CD8-positive, alpha-beta T cell (primary cell): ENCODE measurements at regions of chr4 and their contacts with region 1.

Region 1: DNA sequence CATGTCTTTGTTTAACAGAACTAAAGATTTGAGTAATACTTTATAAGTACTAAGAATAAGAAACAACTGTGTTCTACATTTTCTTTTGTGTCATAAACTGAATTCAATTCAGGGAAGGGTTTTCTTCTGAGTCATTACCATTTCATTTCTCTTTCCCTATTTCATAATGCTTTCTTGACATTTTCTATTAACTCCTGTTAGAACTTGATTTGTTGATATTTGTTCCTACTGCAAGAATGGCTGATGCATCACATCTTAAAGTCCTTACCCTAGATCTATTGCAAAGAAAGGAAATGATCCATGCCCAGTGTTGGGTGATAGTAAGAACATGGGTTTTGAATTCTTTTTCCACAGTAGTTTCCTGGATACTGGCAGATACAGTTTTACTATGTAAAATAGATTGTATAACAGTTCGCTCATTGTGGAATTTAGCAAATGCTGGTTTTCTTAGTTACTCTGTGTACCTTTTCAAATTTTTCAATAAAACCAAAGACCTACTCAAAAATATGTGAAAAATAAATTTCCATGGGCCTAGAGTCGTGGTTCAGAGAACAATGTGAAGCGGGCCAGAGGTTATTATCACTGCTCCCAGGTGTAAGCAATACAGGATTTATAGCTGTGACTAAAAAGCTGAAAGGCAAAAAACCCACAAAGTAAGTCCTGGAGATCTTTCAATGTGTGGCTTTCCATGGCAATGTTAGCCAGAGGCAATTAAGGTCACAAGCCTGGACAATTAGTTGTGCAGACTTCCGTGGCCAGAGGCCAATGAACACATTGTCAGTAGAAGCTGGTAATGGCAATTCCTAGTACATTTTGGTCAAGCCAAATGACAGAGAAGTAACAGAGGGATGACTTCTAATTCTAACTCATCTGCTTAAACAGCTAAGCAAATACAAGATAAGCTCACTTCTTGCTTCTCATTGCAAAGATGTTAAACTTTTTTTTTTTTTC is 127.3 kb upstream of the FAT4 start:
- DNase-seq: no peak
- ATAC-seq: no peak
- H3K4me3 ChIP-seq: no peak overlapping the region
- H3K4me3 Mint-ChIP-seq: no peak overlapping the region
- H3K27ac ChIP-seq: no peak overlapping the region
- H3K27ac Mint-ChIP-seq: no peak overlapping the region
- H3K4me1 ChIP-seq: no peaks in the 10 kb centered on the region
- H3K4me1 Mint-ChIP-seq: no peaks in the 10 kb centered on the region
- H3K27me3 ChIP-seq: no peaks in the 10 kb centered on the region
- H3K27me3 Mint-ChIP-seq: no peaks in the 10 kb centered on the region
- CTCF ChIP-seq: no peak

Region 2: DNA sequence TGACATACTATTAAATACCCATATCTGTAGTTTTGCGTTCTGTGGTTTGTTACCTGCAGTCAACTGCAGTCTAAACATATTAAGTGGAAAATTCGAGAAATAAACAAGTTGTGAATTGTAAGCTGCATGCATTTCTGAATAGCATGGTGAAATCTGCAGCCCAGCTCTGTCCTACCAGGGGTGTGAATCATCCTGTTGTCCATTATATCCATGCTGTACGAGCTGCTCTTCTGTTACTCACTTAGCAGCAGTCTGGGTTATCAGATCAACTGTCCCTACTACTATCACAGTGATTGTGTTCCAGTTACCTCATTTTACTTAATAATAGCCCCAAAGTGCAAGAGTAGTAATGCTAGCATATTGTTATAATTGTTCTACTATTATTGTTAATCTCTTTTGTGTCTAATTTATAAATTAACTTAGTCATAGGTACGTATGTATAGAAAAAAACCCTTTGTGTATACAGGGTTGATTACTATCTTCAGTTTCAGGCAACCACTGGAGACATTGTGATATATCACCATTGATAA is 46.5 kb before region 1 on chr4:
- CTCF ChIA-PET with region 1: no interaction called
- POLR2A ChIA-PET with region 1: no interaction called
- intact Hi-C with region 1: no loop called
- DNase-seq: no peak
- ATAC-seq: no peak
- H3K4me3 ChIP-seq: no peak overlapping the region
- H3K4me3 Mint-ChIP-seq: no peak overlapping the region
- H3K27ac ChIP-seq: no peak overlapping the region
- H3K27ac Mint-ChIP-seq: no peak overlapping the region
- H3K4me1 ChIP-seq: no peaks in the 10 kb centered on the region
- H3K4me1 Mint-ChIP-seq: no peaks in the 10 kb centered on the region
- H3K27me3 ChIP-seq: no peaks in the 10 kb centered on the region
- H3K27me3 Mint-ChIP-seq: no peaks in the 10 kb centered on the region
- CTCF ChIP-seq: no peak

Region 3: DNA sequence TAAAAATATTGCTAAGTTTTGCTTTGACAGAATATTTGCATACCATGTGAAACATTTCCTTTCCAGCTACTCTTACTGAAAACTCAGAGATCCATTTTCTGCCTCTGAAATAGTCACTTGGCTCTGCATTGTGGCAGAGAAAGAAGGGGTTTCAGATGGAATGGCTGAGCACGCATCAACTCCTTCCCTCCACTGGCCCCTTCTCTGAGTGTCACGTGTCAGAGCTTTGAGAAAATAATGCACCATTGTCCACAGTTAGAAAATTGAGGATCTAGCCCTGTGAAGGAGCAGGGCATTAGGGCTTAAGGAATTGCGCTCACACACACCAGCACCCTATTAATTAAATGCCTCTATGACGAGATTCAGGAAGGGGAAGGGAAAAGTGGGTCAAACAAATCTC is 48.5 kb after region 1 on chr4:
- CTCF ChIA-PET with region 1: no interaction called
- POLR2A ChIA-PET with region 1: no interaction called
- intact Hi-C with region 1: loop called in 1 of 2 experiments (anchors 2 kb)
- DNase-seq: no peak
- ATAC-seq: no peak
- H3K4me3 ChIP-seq: no peak overlapping the region
- H3K4me3 Mint-ChIP-seq: no peak overlapping the region
- H3K27ac ChIP-seq: no peak overlapping the region
- H3K27ac Mint-ChIP-seq: no peak overlapping the region
- H3K4me1 ChIP-seq: no peaks in the 10 kb centered on the region
- H3K4me1 Mint-ChIP-seq: no peaks in the 10 kb centered on the region
- H3K27me3 ChIP-seq: no peaks in the 10 kb centered on the region
- H3K27me3 Mint-ChIP-seq: no peaks in the 10 kb centered on the region
- CTCF ChIP-seq: no peak